ENCODE measurements at regions of chr1 and their contacts with region 1.

Region 1: GRCh38 chr1:159798893-159799292 is 3.3 kb upstream of the FCRL6 start:
- DNase-seq: no peak
- H3K4me3 ChIP-seq: no peak overlapping the region
- H3K27ac ChIP-seq: peak overlapping the region in 1 of 8 donors; percentile 24
- H3K4me1 ChIP-seq: peaks cover 2 to 54% (median 32%) of the 10 kb centered on the region in 6 donors
- H3K27me3 ChIP-seq: peaks cover 0 to 24% (median 0%) of the 10 kb centered on the region in 7 donors
- CTCF ChIP-seq: peak in 10 of 11 experiments; percentile 56 to 85 (median 77)
- POLR2A ChIP-seq: no peak

Region 2: DNA sequence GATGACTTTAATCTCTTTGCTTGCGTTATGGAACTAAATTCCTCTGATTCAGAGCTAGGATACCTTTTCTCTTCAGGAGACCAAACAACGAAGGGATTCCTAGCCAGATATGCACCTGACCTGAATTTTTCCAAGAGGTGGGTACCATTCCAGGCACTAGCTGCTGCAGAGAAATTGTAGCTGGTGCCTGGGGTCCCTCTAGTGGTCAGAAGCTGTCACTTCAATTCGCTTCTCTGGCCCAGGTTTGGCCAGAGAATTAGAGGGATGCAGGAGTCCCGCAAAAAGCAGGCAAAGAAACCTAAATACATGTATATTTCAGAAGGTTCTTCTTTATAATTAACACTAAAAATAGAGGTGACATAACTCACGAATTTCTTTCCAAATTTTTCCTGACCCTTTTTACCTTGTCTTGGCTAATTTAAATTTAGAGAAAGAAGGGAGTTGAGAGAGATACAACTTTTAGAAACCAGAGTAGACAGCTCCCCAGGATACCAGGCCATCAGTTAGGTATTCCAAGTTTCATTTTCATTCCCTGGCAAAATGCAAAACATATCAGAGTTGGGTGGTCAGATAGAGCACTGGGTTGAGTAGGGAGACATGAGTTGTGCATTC is 584.6 kb before region 1 on chr1:
- intact Hi-C with region 1: loop called (anchors 10 kb)
- DNase-seq: peak; percentile 68
- H3K4me3 ChIP-seq: no peak overlapping the region
- H3K27ac ChIP-seq: no peak overlapping the region
- H3K4me1 ChIP-seq: peaks cover 0 to 19% (median 11%) of the 10 kb centered on the region in 6 donors
- H3K27me3 ChIP-seq: peaks cover 0 to 58% (median 4%) of the 10 kb centered on the region in 7 donors
- CTCF ChIP-seq: peak; percentile 42 to 91 (median 82)
- POLR2A ChIP-seq: no peak

Region 3: DNA sequence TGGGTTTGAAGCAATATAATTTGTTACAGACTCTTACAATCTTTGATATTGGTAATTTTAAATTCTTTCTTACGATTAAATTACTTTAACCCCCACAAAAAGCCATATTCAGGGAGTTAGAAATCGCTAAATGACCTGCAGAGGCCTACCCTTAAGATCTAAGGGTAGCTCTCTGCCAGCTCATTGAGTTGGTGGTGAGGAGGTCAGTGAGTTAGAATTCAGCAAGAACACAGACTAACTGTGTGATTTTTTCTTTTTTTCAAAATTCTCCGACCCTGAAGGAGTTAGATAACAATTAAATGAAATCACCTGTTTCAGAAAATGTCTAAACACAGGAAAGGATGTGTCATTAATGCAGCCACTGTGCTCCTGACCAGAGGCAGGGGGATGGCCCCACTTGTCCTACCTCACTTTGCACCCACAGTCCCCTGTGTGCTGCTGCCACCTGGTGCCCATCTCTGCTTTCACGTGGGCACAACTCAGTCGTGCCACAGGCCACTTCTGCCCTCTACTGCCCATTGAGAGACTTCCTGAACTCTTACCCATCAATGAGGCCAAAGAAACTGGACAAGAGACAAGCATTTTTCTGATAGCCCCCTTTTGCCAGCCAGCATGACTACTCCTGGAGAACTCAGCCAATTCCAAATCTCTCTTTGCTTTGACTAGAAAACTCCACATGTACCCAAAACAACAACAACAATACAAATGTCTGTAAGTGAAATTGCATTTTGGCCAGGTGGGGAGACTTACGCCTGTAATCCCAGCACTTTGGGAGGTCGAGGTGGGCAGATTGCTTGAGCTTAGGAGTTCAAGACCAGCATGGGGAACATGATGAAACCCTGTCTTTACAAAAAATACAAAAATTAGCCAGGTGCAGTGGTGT is 92.6 kb after region 1 on chr1:
- intact Hi-C with region 1: loop called (anchors 2 kb)
- DNase-seq: peak; percentile 94
- H3K4me3 ChIP-seq: no peak overlapping the region
- H3K27ac ChIP-seq: peak overlapping the region in 4 of 8 donors; percentile 16 to 84 (median 74)
- H3K4me1 ChIP-seq: peaks cover 27 to 64% (median 41%) of the 10 kb centered on the region in 6 donors
- H3K27me3 ChIP-seq: no peaks in the 10 kb centered on the region
- CTCF ChIP-seq: peak; percentile 93 to 100 (median 96)
- POLR2A ChIP-seq: no peak

Region 4: DNA sequence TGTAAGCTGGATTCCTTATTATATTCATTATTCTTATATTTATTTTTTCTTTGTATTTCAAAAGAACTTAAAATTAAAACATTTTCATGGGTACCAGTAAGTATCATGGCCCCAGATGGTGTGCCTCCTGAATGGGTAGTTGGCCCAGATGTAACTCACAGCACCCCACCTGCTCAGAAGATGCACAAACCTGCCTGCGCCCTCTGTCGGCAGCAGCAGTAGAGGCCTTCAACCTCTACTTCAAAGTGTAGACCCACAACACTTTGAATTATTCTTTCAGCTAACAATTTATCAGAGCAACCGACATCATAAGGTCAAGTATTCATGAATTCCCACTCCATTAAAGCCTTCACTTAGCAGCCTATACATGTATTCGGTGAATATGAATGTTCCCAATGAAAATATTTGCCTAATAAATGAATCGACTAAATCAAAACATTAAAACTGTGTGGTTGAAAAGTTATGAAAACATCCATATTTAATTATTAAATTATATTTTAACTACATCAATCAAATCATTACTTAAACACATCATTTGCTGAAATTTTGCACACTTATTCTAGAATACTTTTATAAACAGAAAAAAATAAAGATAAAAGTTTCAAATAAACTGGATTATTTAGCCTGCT is 207.5 kb after region 1 on chr1:
- intact Hi-C with region 1: loop called (anchors 5 kb)
- DNase-seq: peak; percentile 89
- H3K4me3 ChIP-seq: no peak overlapping the region
- H3K27ac ChIP-seq: no peak overlapping the region
- H3K4me1 ChIP-seq: peaks cover 0 to 6% (median 0%) of the 10 kb centered on the region in 6 donors
- H3K27me3 ChIP-seq: peaks cover 0 to 4% (median 0%) of the 10 kb centered on the region in 7 donors
- CTCF ChIP-seq: peak; percentile 53 to 83 (median 74)
- POLR2A ChIP-seq: no peak

Measured in spleen (tissue), 13 donors.